PC-9 (cell line): ENCODE measurements at regions of chr10 and their contacts with region 1.

Region 1: DNA sequence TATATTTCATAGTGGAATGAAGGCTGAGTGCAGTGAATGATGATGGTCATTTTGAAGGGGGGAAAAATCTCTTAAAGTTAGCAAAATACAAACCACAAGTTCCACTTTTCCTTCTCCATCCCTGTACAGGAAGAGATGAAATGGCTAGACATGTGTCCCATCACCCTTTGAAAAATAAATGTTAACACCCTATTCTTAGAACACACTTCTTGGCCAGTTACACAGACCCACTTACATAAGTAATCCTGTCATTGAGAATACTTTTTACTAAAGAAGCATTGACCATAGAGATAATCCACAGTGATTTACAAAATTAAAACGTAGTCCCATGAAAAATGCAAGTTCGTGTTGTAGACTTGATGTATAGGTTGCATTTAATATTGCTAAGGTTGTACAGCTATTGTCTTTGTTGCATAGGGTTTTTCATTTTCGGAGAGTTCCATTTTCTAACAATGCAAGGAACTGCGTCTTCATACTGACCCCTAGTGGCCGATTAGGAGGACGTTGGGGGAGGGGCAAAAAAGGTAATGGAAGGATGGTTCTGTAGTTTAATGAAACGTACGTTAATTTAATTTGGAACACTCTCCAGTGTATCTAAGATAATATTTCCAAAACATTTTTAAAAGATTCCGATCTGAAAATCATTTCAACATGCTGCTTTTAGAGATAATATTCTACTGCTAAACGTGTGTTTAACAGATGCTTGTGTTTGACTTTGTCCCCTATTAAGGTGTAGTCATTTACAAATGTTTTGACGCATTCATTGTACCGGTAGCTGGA is 60.9 kb downstream of the ARMC3 start:
- DNase-seq: peak in 1 of 2 experiments; percentile 46
- H3K4me3 ChIP-seq: no peak overlapping the region
- H3K27ac ChIP-seq: no peak overlapping the region
- H3K4me1 ChIP-seq: no peaks in the 10 kb centered on the region
- H3K27me3 ChIP-seq: no peaks in the 10 kb centered on the region
- CTCF ChIP-seq: peak; percentile 87

Region 2: DNA sequence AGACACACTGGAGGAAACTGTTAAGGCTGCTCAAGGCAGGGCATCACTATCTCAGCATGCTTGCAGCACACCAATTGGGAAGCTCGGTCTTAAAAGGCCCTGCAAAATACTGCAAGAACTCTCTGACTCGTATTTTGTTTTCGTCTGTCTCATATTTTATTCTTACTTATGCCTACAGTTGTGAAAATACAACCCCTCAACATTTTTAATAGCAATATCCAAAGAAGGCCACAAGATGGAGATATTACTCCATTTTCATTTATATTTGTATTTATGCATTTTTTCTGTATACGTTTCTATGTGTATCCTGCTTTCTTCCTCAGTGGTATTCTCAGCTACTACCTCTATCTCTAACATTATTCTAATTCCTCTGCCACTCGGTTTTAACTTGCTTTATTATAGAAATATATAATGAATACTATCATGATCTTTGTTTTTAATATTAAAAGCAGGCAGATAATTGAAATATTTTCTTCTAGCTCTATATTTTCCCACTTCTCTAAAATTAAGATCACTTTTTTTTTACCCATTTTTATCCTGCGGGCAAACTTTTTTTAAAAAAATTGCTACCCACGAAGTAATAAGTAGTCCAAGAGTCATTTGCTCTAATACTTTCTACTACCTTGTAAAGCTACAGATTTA is 995.3 kb before region 1 on chr10:
- CTCF ChIA-PET with region 1: no interaction called
- POLR2A ChIA-PET with region 1: no interaction called
- intact Hi-C with region 1: loop called (anchors 2 kb)
- DNase-seq: no peak
- H3K4me3 ChIP-seq: no peak overlapping the region
- H3K27ac ChIP-seq: no peak overlapping the region
- H3K4me1 ChIP-seq: no peaks in the 10 kb centered on the region
- H3K27me3 ChIP-seq: no peaks in the 10 kb centered on the region
- CTCF ChIP-seq: peak; percentile 82

Region 3: GRCh38 chr10:22573820-22574569 is 414.8 kb before region 1 on chr10:
- CTCF ChIA-PET with region 1: no interaction called
- POLR2A ChIA-PET with region 1: no interaction called
- intact Hi-C with region 1: loop called (anchors 2 kb)
- DNase-seq: no peak
- H3K4me3 ChIP-seq: no peak overlapping the region
- H3K27ac ChIP-seq: no peak overlapping the region
- H3K4me1 ChIP-seq: no peaks in the 10 kb centered on the region
- H3K27me3 ChIP-seq: no peaks in the 10 kb centered on the region
- CTCF ChIP-seq: peak; percentile 59

Region 4: DNA sequence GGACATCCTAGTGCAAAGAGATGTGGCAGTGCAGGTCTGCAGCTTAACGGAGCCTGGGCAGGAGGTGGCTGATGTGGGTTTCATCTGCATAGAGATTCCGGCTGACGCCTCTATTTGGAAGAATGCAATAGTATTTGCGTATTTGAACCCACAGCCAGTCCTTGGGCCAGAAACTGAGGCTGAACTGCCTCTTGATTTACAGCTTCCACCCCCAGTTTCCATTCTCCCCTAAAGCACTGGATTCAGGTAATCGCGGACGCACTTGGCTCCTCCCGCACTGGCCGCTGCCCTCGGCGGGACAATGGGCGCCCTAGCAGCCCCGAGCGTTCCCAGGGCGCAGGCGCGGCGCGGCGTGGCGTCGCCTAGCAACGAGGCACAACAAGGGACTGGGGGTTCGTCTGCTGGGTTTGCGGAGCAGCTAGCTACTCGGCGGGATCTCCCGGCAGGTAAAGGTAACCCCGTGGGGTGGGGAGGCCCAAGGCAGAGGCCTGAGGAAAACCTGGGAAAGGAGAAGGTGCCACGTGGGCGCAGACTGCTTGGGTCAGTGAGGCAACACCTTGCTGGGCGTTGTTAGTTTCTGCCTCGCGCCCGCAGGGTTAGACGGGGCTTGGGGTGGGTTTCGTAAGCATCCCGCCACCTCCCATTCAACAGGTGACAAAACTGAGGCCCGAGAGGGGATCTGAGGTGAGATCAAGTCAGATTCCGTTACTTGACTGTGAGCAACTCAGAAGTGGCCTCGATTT is 60.9 kb before region 1 on chr10 and contains the start of gene ARMC3:
- CTCF ChIA-PET with region 1: no interaction called
- POLR2A ChIA-PET with region 1: no interaction called
- intact Hi-C with region 1: loop called (anchors 10 kb)
- DNase-seq: peak; percentile 52 to 90
- H3K4me3 ChIP-seq: peak within 1 kb of the TSS; percentile 72
- H3K27ac ChIP-seq: no peak within 1 kb of the TSS
- H3K4me1 ChIP-seq: peaks cover 5% of the 10 kb centered on the region; the same call in 1 of the 2 replicates
- H3K27me3 ChIP-seq: no peaks in the 10 kb centered on the region
- CTCF ChIP-seq: no peak
- total RNA-seq, gene ARMC3: 10.0 and 14.4 TPM in 2 replicates

Region 5: DNA sequence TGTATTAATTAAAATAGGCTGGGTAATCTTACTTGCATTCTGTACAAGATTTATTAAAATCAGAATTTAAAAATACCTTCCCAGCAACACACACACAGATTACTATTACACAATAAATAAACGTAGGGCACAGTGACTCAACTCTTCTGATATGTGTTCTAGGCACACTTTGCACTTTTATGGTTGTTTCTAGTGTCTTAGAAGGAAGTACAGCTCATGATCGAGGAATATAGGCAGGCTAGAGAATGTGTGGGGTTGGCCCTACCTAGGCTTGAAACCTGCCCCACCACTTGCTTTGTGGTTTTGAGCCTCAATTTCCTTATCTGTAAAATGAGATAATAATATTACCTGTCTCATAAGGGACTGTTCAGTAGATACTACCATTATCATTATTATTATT is 30.4 kb before region 1 on chr10:
- CTCF ChIA-PET with region 1: no interaction called
- POLR2A ChIA-PET with region 1: no interaction called
- intact Hi-C with region 1: no loop called
- DNase-seq: peak in 1 of 2 experiments; percentile 64
- H3K4me3 ChIP-seq: no peak overlapping the region
- H3K27ac ChIP-seq: no peak overlapping the region
- H3K4me1 ChIP-seq: no peaks in the 10 kb centered on the region
- H3K27me3 ChIP-seq: no peaks in the 10 kb centered on the region
- CTCF ChIP-seq: no peak